Sigmoid colon (tissue), 7 donors: ENCODE measurements at regions of chr12 and their contacts with region 1.

Region 1: DNA sequence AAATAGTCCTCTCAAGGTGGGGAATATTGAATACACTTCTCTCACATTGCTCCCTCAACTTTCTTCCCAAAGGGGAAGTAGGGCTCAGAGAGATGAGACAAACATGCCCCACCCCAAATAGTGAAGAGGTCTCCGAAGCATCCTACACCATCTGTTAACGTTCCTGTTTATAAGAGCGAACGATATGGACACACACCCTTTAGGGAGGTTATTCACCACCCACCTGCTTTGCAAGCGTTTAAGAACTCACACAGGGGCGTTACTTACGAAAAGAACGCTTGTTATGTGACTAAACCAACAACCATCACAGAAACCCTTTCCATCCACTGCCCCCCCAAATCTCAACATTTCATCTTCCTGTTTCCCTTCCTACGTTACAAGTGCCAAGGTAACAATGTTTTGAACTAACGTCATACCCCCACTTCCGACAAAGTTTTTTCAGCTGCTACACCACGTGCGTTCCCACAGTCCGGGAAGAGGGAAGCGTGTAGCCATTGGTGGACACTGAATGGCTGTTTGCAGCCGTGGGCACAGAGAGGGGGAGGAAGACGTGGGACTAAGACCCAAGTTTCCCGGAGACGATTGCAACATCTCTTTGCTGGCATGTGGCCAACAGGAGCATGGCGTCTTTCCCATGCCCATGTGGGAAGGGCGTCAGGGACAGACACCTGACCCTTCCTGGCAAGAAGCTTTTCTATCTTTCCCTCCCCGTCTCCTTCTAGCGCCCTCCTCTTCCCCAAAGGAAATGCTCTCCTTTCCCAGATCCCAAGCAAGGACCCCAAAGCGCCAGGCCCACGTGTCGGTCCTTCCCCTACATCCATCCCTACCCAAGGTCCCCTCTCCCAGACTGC is 1.2 kb downstream of the YBX3 start:
- DNase-seq: peak; percentile 98
- H3K4me3 ChIP-seq: peak overlapping the region; percentile 65 to 99 (median 96)
- H3K27ac ChIP-seq: peak overlapping the region; percentile 96 to 99 (median 98)
- H3K4me1 ChIP-seq: peaks cover 0 to 55% (median 50%) of the 10 kb centered on the region in 4 donors
- H3K27me3 ChIP-seq: no peaks in the 10 kb centered on the region
- CTCF ChIP-seq: no peak
- EP300 ChIP-seq: peak; percentile 68 to 97 (median 86)
- POLR2A ChIP-seq: peak; percentile 24 to 26

Region 2: DNA sequence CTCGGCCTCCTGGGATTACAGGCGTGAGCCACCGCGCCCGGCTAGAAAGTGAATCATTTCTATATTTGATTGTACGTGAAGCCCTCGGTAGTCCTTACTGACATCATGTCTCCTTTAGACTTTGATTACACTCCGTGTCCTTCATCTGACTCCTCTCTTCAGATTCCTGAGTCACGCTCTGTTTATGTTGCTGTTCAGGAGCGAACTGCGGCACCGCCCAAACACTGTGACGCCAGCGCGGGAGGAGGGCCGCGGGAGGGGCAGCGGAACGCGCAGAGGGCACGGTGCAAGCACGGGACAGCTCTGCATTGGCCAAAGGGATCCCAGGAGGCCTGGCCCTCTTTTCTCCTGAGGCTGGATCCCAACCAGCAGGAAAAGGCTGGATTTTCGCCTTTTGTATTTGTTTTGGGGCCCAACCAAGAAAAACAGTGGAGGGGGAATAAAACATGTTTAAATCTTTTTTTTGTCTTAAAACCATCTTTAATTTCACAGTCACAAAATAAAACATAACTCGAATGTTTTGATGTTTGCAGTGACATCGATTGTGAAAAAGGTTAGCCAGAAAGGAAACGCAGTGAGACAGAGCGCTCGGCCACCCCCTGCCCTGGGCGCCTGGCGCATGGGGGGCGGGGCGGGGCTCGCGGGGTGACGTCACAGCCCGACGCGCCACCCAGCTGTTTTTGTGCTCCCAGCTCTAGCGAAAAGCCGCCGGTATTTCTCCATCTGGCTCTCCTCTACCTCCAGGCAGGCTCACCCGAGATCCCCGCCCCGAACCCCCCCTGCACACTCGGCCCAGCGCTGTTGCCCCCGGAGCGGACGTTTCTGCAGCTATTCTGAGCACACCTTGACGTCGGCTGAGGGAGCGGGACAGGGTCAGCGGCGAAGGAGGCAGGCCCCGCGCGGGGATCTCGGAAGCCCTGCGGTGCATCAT is 509.4 kb before region 1 on chr12 and contains the start of gene GABARAPL1:
- intact Hi-C with region 1: loop called (anchors 5 kb)
- DNase-seq: peak; percentile 99
- H3K4me3 ChIP-seq: peak within 1 kb of the TSS; percentile 68 to 93 (median 88)
- H3K27ac ChIP-seq: peak within 1 kb of the TSS; percentile 95 to 100 (median 100)
- H3K4me1 ChIP-seq: peaks cover 0 to 25% (median 21%) of the 10 kb centered on the region in 4 donors
- H3K27me3 ChIP-seq: no peaks in the 10 kb centered on the region
- CTCF ChIP-seq: no peak
- EP300 ChIP-seq: peak; percentile 79 to 99 (median 91)
- POLR2A ChIP-seq: peak in 1 of 2 donors; percentile 56
- total RNA-seq, gene GABARAPL1: 78.5 to 122 (median 102) TPM

Region 3: DNA sequence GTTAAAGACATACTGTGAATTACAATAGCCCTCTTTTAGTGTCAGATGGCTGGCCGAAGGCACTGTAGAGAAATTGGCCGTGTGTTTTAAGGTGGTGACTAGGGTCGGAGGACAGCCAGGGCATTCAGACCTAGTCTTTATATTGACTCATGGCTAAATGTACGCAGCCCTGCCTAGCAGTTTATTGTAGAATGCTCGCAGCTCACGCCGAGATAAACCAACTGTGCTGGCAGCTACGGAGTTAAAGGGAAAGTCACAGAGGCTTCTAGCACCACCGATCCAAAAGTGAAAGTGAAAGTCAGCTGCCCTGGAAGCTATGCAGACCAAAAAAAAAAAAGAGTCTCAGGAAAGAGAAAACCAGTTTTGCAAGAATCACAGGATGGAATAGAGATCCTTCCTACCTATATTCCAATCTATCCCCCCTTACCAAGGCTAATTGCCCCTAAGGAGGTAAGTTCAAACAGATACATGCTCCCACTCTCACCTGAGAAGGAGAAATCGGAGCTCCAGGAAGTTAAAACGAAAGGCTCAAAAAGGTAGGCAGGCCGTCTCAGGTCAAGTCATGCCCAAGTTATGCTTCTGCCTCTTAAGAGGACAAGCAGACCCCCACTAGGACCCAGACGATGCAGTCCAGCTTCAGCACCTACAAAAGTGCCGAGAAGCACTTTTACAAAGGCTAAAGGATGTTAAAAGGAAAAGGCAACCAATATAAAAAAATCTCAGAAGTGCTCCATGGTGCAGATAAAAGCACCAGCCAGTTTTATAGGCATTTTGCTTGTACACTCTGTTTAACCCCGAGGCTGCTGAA is 356.9 kb before region 1 on chr12:
- intact Hi-C with region 1: loop called (anchors 10 kb)
- DNase-seq: peak; percentile 79
- H3K4me3 ChIP-seq: peak overlapping the region; percentile 45 to 65 (median 59)
- H3K27ac ChIP-seq: peak overlapping the region; percentile 89 to 94 (median 90)
- H3K4me1 ChIP-seq: peaks cover 0 to 35% (median 31%) of the 10 kb centered on the region in 4 donors
- H3K27me3 ChIP-seq: no peaks in the 10 kb centered on the region
- CTCF ChIP-seq: no peak
- EP300 ChIP-seq: no peak
- POLR2A ChIP-seq: no peak

Region 4: GRCh38 chr12:10613349-10614055 is 108.4 kb before region 1 on chr12 and contains the start of gene MAGOHB:
- intact Hi-C with region 1: loop called (anchors 2 kb)
- DNase-seq: peak; percentile 98
- H3K4me3 ChIP-seq: peak within 1 kb of the TSS; percentile 61 to 89 (median 74)
- H3K27ac ChIP-seq: peak within 1 kb of the TSS; percentile 82 to 90 (median 90)
- H3K4me1 ChIP-seq: peaks cover 0 to 20% (median 14%) of the 10 kb centered on the region in 4 donors
- H3K27me3 ChIP-seq: no peaks in the 10 kb centered on the region
- CTCF ChIP-seq: no peak
- EP300 ChIP-seq: peak in 2 of 4 donors; percentile 51 to 71
- POLR2A ChIP-seq: peak; percentile 32 to 43
- total RNA-seq, gene MAGOHB: 8.6 to 17.4 (median 12.5) TPM

Region 5: DNA sequence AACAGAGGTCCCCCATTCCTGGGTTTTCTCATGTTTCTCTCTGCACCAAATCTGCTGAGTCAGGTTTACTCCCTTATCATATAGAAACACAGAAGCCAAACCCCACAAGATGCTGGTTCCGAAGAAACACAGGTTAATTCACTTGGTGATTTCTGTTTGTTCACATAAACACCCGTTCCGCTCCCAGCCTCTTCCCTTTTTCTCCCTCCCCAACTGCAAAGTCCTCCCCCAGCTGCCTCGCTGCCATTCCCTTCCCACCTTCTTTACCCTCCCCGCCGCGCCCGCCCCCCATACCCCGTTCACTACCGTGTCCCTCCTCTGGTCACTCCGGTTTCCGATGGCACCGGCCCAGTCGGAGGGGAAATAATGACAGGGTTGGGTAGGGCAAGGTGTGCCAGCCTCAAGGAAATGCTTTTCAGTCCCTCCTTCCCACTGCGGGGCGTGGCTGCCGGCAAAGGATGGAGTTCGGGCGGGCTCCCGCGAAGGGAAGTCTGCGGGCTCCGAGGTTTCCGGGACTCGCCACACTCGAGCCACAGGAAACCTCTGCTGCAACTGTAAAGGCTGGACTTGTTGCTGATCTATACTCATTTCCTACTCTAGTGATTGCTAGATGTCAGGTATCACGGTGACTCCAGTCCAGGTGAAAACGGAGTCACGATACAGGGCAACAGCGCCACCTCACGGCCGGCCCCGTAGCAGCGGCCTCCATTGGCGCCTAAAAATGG is 48.1 kb before region 1 on chr12 and contains the start of gene STYK1:
- intact Hi-C with region 1: no loop called
- DNase-seq: no peak
- H3K4me3 ChIP-seq: peak within 1 kb of the TSS; percentile 22 to 47 (median 40)
- H3K27ac ChIP-seq: no peak within 1 kb of the TSS
- H3K4me1 ChIP-seq: peaks cover 0 to 12% (median 11%) of the 10 kb centered on the region in 4 donors
- H3K27me3 ChIP-seq: peaks cover 0 to 30% (median 4%) of the 10 kb centered on the region in 3 donors
- CTCF ChIP-seq: peak in 3 of 4 experiments; percentile 51 to 67 (median 63)
- EP300 ChIP-seq: no peak
- POLR2A ChIP-seq: no peak
- total RNA-seq, gene STYK1: 0.16 to 0.54 (median 0.36) TPM in 3 of 4 donors, not detected in the other

Region 6: GRCh38 chr12:10749700-10750384 is 28.0 kb after region 1 on chr12:
- intact Hi-C with region 1: loop called (anchors 2 kb)
- DNase-seq: peak; percentile 89
- H3K4me3 ChIP-seq: peak overlapping the region; percentile 10 to 42 (median 34)
- H3K27ac ChIP-seq: peak overlapping the region; percentile 61 to 70 (median 65)
- H3K4me1 ChIP-seq: peaks cover 0 to 10% (median 0%) of the 10 kb centered on the region in 4 donors
- H3K27me3 ChIP-seq: no peaks in the 10 kb centered on the region
- CTCF ChIP-seq: peak; percentile 86 to 94 (median 92)
- EP300 ChIP-seq: peak in 3 of 4 donors; percentile 49 to 66 (median 57)
- POLR2A ChIP-seq: no peak

Region 7: DNA sequence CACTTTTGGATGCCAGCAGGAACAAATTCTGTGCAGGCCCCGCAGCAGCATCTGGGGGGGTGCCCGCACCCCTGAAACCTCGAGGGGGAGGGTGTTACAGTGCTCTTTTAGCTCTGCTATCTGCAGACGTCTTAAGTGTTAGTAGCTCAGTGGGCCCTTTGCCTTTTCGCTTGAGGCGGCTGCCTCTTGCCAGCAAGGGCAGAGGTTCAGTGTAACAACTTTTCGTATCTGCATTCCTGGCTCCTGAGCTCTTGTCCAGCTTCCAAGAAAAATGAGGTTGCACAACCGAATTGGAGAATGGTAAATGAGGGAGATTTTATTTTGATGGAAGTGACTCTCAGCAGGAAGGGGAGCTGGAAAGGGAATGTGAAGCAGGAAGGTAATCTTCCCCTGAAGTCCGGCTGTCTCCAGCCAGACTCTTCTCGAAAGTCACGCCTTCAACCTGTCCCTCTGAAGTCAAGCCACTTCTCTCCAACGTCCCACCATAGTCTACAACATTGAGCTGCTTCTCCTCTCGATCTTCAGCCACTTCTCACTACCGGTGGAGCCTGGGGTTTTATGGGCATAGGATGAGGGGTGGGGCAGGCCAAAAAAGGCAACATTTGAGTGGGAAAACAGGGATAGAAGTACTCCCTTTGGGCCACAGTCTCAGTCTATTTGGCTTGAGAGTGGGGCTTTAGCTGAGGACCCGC is 247.0 kb after region 1 on chr12:
- intact Hi-C with region 1: no loop called
- DNase-seq: no peak
- H3K4me3 ChIP-seq: no peak overlapping the region
- H3K27ac ChIP-seq: no peak overlapping the region
- H3K4me1 ChIP-seq: no peaks in the 10 kb centered on the region
- H3K27me3 ChIP-seq: no peaks in the 10 kb centered on the region
- CTCF ChIP-seq: no peak
- EP300 ChIP-seq: no peak
- POLR2A ChIP-seq: no peak

Region 8: GRCh38 chr12:11171145-11171968 is 449.5 kb after region 1 on chr12 and contains the start of gene SMIM10L1:
- intact Hi-C with region 1: loop called (anchors 2 kb)
- DNase-seq: peak; percentile 96
- H3K4me3 ChIP-seq: peak within 1 kb of the TSS; percentile 79 to 98 (median 90)
- H3K27ac ChIP-seq: peak within 1 kb of the TSS; percentile 95 to 99 (median 97)
- H3K4me1 ChIP-seq: peaks cover 0 to 53% (median 37%) of the 10 kb centered on the region in 4 donors
- H3K27me3 ChIP-seq: no peaks in the 10 kb centered on the region
- CTCF ChIP-seq: no peak
- EP300 ChIP-seq: no peak
- POLR2A ChIP-seq: peak; percentile 13 to 36
- total RNA-seq, gene SMIM10L1: 11.1 to 17.8 (median 14.3) TPM